Naive thymus-derived CD4-positive, alpha-beta T cell (primary cell): ENCODE measurements at regions of chr2 and their contacts with region 1.

Region 1: GRCh38 chr2:157443795-157444640 is at the start of gene CYTIP:
- DNase-seq: peak; percentile 32 to 85 (median 78)
- ATAC-seq: peak; percentile 71
- H3K4me3 ChIP-seq: peak within 1 kb of the TSS; percentile 97
- H3K4me3 Mint-ChIP-seq: peak within 1 kb of the TSS; percentile 92 to 100 (median 97)
- H3K27ac ChIP-seq: peak within 1 kb of the TSS; percentile 89
- H3K27ac Mint-ChIP-seq: peak within 1 kb of the TSS; percentile 95 to 100 (median 98)
- H3K4me1 ChIP-seq: peaks cover 30 to 34% of the 10 kb centered on the region in 2 donors
- H3K4me1 Mint-ChIP-seq: peaks cover 32 to 48% (median 46%) of the 10 kb centered on the region in 7 donors
- H3K27me3 ChIP-seq: no peaks in the 10 kb centered on the region
- H3K27me3 Mint-ChIP-seq: no peaks in the 10 kb centered on the region
- total RNA-seq, gene CYTIP: 290 to 406 (median 363) TPM

Region 2: GRCh38 chr2:157173740-157174184 is 270.3 kb before region 1 on chr2:
- CTCF ChIA-PET with region 1: no interaction called
- POLR2A ChIA-PET with region 1: no interaction called
- intact Hi-C with region 1: no loop called
- DNase-seq: no peak
- ATAC-seq: no peak
- H3K4me3 ChIP-seq: no peak overlapping the region
- H3K4me3 Mint-ChIP-seq: no peak overlapping the region
- H3K27ac ChIP-seq: no peak overlapping the region
- H3K27ac Mint-ChIP-seq: no peak overlapping the region
- H3K4me1 ChIP-seq: no peaks in the 10 kb centered on the region
- H3K4me1 Mint-ChIP-seq: no peaks in the 10 kb centered on the region
- H3K27me3 ChIP-seq: no peaks in the 10 kb centered on the region
- H3K27me3 Mint-ChIP-seq: peaks cover 8 to 15% (median 14%) of the 10 kb centered on the region in 5 donors

Region 3: DNA sequence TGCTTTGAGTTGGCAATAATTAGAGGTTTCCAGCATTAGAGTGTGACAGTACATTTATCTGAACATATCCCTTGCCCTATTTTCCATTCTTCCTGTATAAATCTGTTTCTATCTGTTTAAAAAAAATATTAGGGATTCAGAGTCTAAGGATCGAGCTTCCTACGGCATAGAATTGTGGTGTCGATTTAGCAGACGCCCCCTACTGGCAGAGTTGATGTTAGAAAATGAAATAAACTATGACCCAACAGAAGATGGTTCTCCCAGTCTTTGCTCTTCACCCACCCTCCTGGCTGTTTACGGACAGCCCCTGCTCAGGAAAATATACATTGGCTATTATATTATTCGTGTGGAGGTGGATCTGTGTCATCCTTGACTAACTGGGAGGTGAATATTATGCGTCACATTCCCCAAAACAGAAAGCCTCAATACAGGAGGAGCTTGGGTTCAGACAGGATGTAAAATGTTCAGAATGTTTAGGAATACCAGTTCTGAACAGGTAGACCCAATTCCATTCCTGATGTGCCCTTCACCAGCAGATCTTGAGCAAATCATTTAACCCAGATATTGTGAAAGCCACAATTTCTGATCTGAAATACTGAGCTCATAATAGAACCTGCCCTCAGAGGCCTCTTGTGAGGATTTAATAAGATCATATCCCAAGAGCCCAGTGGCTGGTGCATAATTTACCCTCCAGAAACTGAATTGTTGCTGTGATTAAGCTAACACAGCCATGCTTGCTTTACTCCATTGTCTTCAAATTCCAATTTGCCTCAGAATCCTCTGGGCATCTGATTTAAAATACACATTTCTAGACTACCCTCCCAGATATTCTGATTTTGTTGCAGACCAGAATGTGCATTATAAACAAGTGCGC is 107.6 kb before region 1 on chr2:
- CTCF ChIA-PET with region 1: interaction called, 36 read pairs
- POLR2A ChIA-PET with region 1: interaction called, 554 read pairs
- intact Hi-C with region 1: no loop called
- DNase-seq: peak in 7 of 9 donors; percentile 19 to 59 (median 53)
- ATAC-seq: peak; percentile 52
- H3K4me3 ChIP-seq: peak overlapping the region; percentile 5
- H3K4me3 Mint-ChIP-seq: peak overlapping the region; percentile 5 to 86 (median 70)
- H3K27ac ChIP-seq: peak overlapping the region; percentile 15
- H3K27ac Mint-ChIP-seq: peak overlapping the region; percentile 15 to 92 (median 81)
- H3K4me1 ChIP-seq: peaks cover 23 to 58% of the 10 kb centered on the region in 2 donors
- H3K4me1 Mint-ChIP-seq: peaks cover 28 to 90% (median 83%) of the 10 kb centered on the region in 7 donors
- H3K27me3 ChIP-seq: no peaks in the 10 kb centered on the region
- H3K27me3 Mint-ChIP-seq: no peaks in the 10 kb centered on the region

Region 4: DNA sequence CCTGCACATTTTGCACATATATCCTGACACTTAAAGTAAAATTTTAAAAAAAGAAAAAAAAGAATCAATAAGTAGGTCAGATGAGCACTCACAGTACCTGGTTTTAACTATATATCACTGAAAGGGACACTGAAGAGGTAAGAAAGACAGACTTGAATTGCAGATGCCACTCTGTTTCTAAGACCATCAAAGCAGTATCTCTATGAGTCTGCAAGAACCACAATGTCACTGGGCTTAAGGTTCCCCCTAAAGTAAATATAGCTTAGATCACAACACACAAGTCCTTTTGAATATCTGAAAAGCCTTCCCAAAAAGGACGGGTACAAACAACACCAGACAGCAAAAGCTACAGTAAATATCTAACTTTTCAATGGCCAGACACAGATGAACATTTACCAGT is 57.8 kb before region 1 on chr2:
- CTCF ChIA-PET with region 1: no interaction called
- POLR2A ChIA-PET with region 1: no interaction called
- intact Hi-C with region 1: no loop called
- DNase-seq: no peak
- ATAC-seq: peak; percentile 34
- H3K4me3 ChIP-seq: no peak overlapping the region
- H3K4me3 Mint-ChIP-seq: peak overlapping the region in 4 of 10 donors; percentile 0 to 41 (median 20)
- H3K27ac ChIP-seq: no peak overlapping the region
- H3K27ac Mint-ChIP-seq: peak overlapping the region in 8 of 9 donors; percentile 44 to 87 (median 72)
- H3K4me1 ChIP-seq: peaks cover 3 to 21% of the 10 kb centered on the region in 2 donors
- H3K4me1 Mint-ChIP-seq: peaks cover 9 to 73% (median 68%) of the 10 kb centered on the region in 7 donors
- H3K27me3 ChIP-seq: no peaks in the 10 kb centered on the region
- H3K27me3 Mint-ChIP-seq: no peaks in the 10 kb centered on the region

Region 5: GRCh38 chr2:157413326-157414035 is 30.5 kb before region 1 on chr2:
- CTCF ChIA-PET with region 1: interaction called, 4 read pairs
- POLR2A ChIA-PET with region 1: interaction called, 810 read pairs
- intact Hi-C with region 1: loop called (anchors 1 kb)
- DNase-seq: peak in 7 of 9 donors; percentile 71 to 94 (median 88)
- ATAC-seq: peak; percentile 86
- H3K4me3 ChIP-seq: peak overlapping the region; percentile 22
- H3K4me3 Mint-ChIP-seq: peak overlapping the region; percentile 45 to 85 (median 68)
- H3K27ac ChIP-seq: peak overlapping the region; percentile 86
- H3K27ac Mint-ChIP-seq: peak overlapping the region; percentile 92 to 98 (median 95)
- H3K4me1 ChIP-seq: peaks cover 84 to 89% of the 10 kb centered on the region in 2 donors
- H3K4me1 Mint-ChIP-seq: peaks cover 58 to 97% (median 93%) of the 10 kb centered on the region in 7 donors
- H3K27me3 ChIP-seq: no peaks in the 10 kb centered on the region
- H3K27me3 Mint-ChIP-seq: no peaks in the 10 kb centered on the region

Region 6: GRCh38 chr2:157433394-157433793 is 10.6 kb before region 1 on chr2:
- CTCF ChIA-PET with region 1: interaction called, 4 read pairs
- POLR2A ChIA-PET with region 1: interaction called, 583 read pairs
- intact Hi-C with region 1: loop called (anchors 1 kb)
- DNase-seq: peak in 2 of 9 donors; percentile 40 to 60
- ATAC-seq: peak; percentile 7
- H3K4me3 ChIP-seq: peak overlapping the region; percentile 60
- H3K4me3 Mint-ChIP-seq: peak overlapping the region; percentile 87 to 100 (median 97)
- H3K27ac ChIP-seq: peak overlapping the region; percentile 89
- H3K27ac Mint-ChIP-seq: peak overlapping the region; percentile 86 to 99 (median 96)
- H3K4me1 ChIP-seq: peaks cover 54 to 62% of the 10 kb centered on the region in 2 donors
- H3K4me1 Mint-ChIP-seq: peaks cover 61 to 89% (median 73%) of the 10 kb centered on the region in 7 donors
- H3K27me3 ChIP-seq: no peaks in the 10 kb centered on the region
- H3K27me3 Mint-ChIP-seq: no peaks in the 10 kb centered on the region

Region 7: DNA sequence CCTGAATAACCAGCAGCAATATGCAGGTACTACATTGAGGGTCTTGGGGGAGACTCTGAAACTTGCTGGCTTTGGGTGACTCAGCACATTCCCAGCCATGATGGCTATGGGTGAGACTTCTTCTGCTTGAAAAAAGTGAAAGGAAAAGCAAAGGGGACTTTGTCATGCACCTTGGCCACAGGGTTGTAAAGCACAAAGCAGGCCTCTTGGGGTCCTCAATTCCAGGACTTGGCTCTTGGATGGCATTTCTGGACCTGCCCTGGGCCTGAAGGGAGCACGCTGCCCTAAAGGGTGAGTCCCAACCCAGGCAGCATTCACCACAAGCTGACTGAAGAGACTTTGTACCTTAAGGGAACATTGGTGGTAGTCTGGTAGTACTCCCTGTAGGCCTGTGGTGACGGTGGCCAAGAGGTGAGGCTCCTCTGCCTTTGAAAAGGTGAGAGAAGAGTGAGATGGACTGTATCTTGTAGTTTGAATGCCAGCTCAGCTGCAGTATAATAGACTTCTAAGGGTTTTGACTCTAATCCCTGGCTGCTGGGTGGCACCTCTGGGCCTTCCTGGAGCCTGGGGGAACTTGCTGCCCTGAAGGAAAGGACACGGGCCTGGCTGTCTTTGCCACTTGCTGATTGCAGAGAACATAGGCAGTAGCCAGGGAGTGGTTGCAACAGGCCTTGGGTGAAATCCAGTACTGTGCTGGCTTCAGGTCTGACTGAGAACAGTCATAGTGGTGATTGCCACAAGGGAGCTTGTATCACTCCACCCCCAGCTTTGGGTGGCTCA is 36.4 kb after region 1 on chr2:
- CTCF ChIA-PET with region 1: no interaction called
- POLR2A ChIA-PET with region 1: interaction called, 7 read pairs
- intact Hi-C with region 1: loop called in 1 of 2 experiments (anchors 1 kb)
- DNase-seq: peak in 1 of 9 donors; percentile 62
- ATAC-seq: peak; percentile 46
- H3K4me3 ChIP-seq: no peak overlapping the region
- H3K4me3 Mint-ChIP-seq: peak overlapping the region; percentile 11 to 86 (median 50)
- H3K27ac ChIP-seq: no peak overlapping the region
- H3K27ac Mint-ChIP-seq: peak overlapping the region in 7 of 9 donors; percentile 21 to 95 (median 84)
- H3K4me1 ChIP-seq: peaks cover 0 to 25% of the 10 kb centered on the region in 2 donors
- H3K4me1 Mint-ChIP-seq: peaks cover 22 to 81% (median 53%) of the 10 kb centered on the region in 7 donors
- H3K27me3 ChIP-seq: no peaks in the 10 kb centered on the region
- H3K27me3 Mint-ChIP-seq: no peaks in the 10 kb centered on the region

Region 8: DNA sequence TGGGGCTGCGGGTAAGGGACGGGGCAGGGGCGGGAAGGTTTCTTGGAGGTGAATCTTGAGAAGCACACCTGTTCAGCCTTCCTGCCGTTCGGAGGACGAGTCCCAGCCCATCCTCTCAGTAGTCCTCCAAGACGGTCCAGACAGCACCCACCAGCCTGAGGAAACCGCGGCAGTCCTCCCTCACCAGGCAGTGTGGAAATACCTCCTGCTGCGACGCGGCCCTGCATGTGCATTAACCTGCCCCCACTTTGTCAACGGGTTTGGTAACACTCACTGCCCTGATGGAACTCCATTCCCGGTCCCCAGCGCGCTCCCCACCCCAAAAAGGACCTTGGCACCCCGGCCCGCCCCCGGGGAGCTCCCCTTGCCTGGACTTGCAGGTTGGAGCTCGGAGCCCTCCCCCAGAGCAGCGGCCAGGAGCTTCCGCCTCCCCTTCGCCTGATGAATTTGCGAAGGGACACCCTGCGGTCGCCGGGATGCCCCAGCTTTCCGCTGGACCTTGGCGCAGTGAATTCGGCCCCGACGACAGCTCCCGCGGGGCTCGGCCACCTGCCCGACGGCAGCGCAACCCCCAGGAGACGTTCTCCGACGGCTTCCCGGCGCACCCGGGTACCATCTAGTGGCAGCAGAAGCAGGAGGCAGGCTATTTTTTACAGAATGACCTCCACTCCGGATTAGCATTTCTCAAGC is 153.1 kb after region 1 on chr2:
- CTCF ChIA-PET with region 1: no interaction called
- POLR2A ChIA-PET with region 1: no interaction called
- intact Hi-C with region 1: loop called in 1 of 2 experiments (anchors 2 kb)
- DNase-seq: peak; percentile 32 to 60 (median 53)
- ATAC-seq: peak; percentile 80
- H3K4me3 ChIP-seq: no peak overlapping the region
- H3K4me3 Mint-ChIP-seq: peak overlapping the region; percentile 61 to 81 (median 72)
- H3K27ac ChIP-seq: no peak overlapping the region
- H3K27ac Mint-ChIP-seq: peak overlapping the region in 2 of 9 donors; percentile 21 to 65
- H3K4me1 ChIP-seq: no peaks in the 10 kb centered on the region
- H3K4me1 Mint-ChIP-seq: peaks cover 9 to 30% (median 20%) of the 10 kb centered on the region in 7 donors
- H3K27me3 ChIP-seq: no peaks in the 10 kb centered on the region
- H3K27me3 Mint-ChIP-seq: peaks cover 0 to 37% (median 0%) of the 10 kb centered on the region in 5 donors